Dorsolateral prefrontal cortex (tissue), 120 donors: ENCODE measurements at regions of chr12 and their contacts with region 1.

Region 1: DNA sequence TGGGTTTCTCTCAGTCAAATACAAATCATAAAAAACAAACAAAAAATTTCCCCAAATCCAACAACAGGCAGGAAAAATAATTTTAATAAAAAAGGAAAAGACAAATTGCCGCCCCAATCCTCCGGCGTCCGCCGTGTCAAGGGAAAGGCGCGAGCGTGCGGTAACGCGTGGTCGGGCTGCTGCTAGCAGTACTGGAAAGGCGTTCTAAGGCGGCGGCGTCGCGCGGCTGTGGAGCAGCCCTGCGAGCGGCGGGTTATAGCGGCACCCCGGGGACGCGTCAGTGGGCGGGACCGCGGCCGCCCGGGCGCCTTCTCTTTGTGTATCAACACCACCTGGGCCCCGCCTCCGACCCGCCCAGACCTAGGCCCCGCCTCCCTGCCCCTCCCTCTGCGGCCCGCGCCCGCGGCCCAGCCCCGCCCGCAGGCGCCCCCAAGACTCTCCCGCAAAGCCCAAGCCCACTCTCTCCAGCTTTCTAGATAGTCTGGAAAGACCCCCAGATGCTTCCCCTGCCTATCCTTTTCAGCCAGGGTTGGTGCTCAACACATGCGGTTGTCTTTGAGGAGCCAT is at the start of gene SLC38A2:
- DNase-seq: peak; percentile 97 to 99 (median 98)
- H3K4me3 ChIP-seq: peak within 1 kb of the TSS; percentile 61 to 99 (median 93)
- H3K27ac ChIP-seq: peak within 1 kb of the TSS; percentile 92 to 100 (median 99)
- H3K27me3 ChIP-seq: no peaks in the 10 kb centered on the region
- CTCF ChIP-seq: peak in 13 of 56 donors; percentile 5 to 48 (median 30)
- total RNA-seq, gene SLC38A2: 80.8 to 431 (median 175) TPM

Region 2: GRCh38 chr12:45728630-45729232 is 643.9 kb before region 1 on chr12:
- intact Hi-C with region 1: loop called in 1 of 2 experiments (anchors 5 kb)
- DNase-seq: peak; percentile 93 to 98 (median 96)
- H3K4me3 ChIP-seq: peak overlapping the region; percentile 54 to 97 (median 88)
- H3K27ac ChIP-seq: peak overlapping the region; percentile 95 to 100 (median 99)
- H3K27me3 ChIP-seq: no peaks in the 10 kb centered on the region
- CTCF ChIP-seq: peak; percentile 58 to 97 (median 82)

Region 3: DNA sequence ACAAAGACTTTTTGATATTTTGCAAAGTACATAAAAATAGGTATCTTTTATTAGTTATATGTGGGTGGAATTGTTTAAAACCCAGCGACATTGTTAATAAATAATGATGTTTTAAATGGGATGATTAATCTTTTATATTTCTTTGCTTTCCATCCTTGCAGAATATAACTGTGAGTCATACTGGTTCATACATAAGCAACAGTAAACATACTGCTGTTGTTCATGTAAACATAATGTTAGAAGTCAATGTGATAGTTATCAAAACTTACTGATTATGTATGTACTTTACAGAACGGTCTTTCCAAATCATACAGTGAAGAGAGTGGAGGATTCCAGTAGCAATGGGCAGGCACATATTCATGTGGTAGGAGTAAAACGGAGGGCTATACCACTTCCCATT is 523.3 kb before region 1 on chr12:
- intact Hi-C with region 1: no loop called
- DNase-seq: no peak
- H3K4me3 ChIP-seq: no peak overlapping the region
- H3K27ac ChIP-seq: no peak overlapping the region
- H3K27me3 ChIP-seq: no peaks in the 10 kb centered on the region
- CTCF ChIP-seq: no peak

Region 4: DNA sequence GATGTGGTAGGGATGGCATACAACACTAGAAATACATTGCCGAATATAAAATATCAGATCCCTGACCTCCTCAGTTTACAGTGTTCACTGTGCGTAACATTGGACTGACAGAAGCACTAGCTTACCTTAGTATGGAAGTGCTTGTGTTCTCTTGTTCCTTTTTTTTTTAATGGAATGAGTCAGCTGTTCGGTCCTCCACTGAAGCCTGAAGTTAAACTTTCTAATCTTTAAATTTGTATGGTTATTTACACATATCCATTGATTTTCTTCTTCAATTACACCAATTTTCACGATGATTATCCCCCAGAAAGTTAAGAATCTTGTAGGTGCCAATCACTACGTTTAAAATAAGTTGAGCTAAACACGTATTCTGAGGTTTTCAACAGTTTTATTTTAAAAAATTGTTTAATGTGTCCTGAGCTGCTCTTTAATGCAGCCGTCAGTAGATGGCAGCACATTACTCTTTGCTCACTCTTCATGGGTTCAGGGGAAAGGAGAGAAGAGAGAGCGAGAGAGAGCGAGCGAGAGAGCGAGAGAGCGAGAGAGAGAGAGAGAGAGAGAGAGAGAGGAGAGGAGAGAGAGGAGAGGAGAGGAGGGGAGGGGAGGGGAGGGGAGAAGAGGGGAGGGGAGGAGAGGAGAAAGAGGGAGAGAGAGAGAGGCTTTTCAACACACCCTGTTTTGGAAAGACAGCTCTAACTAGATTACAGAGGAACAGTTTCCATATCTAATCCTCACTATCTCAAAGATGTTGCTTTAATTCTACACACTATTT is 247.6 kb before region 1 on chr12:
- intact Hi-C with region 1: loop called in 1 of 2 experiments (anchors 10 kb)
- DNase-seq: peak in 5 of 10 donors; percentile 20 to 66 (median 52)
- H3K4me3 ChIP-seq: peak overlapping the region in 56 of 59 donors; percentile 3 to 63 (median 42)
- H3K27ac ChIP-seq: peak overlapping the region in 31 of 59 donors; percentile 2 to 76 (median 53)
- H3K27me3 ChIP-seq: no peaks in the 10 kb centered on the region
- CTCF ChIP-seq: peak; percentile 48 to 79 (median 68)

Region 5: GRCh38 chr12:46268590-46269558 is 103.8 kb before region 1 on chr12 and contains the start of gene SLC38A1:
- intact Hi-C with region 1: loop called (anchors 5 kb)
- DNase-seq: peak; percentile 56 to 90 (median 83)
- H3K4me3 ChIP-seq: peak within 1 kb of the TSS; percentile 53 to 89 (median 74)
- H3K27ac ChIP-seq: peak within 1 kb of the TSS in 58 of 59 donors; percentile 47 to 95 (median 84)
- H3K27me3 ChIP-seq: peaks cover 0 to 23% (median 0%) of the 10 kb centered on the region in 45 donors
- CTCF ChIP-seq: peak in 2 of 56 donors; percentile 7 to 27
- total RNA-seq, gene SLC38A1: 59.0 to 128 (median 90.2) TPM

Region 6: DNA sequence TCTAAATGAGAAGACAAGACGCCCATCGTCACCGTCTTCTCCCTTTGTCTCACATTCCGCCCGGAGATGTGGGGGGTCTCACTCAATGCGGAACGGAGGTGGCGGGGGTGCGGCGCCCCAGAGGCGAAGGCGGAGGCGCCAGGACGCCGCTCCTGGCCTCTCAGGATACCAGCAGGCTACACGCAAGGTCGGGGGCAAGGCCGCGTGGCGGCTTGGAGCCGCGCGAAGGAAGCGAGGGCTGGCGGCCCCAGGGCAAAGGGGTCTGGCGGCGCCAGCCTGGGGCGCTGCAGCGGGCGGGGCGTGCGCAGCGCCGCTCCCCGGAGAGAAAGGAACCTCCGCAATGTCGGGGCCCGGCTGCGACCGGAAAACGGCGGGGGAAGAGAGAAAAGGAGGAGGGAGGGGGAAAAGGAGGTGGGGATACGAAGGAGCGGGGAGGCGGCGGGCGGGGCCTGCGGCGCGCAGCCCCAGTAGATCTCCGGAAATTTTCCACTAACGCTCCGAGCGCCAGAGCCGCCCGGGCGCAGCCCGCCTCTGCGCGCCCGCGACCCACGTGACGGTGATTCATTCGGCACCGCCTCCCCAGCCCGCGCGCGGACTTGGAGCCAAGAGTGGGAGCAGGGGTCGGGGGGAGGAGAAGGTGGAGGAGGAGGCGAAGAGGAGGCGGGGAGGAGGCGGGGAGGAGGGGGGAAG is 10.5 kb after region 1 on chr12:
- intact Hi-C with region 1: loop called (anchors 1 kb)
- DNase-seq: peak; percentile 93 to 99 (median 95)
- H3K4me3 ChIP-seq: peak overlapping the region; percentile 51 to 93 (median 83)
- H3K27ac ChIP-seq: peak overlapping the region; percentile 92 to 100 (median 99)
- H3K27me3 ChIP-seq: no peaks in the 10 kb centered on the region
- CTCF ChIP-seq: peak in 45 of 56 donors; percentile 11 to 63 (median 36)

Region 7: DNA sequence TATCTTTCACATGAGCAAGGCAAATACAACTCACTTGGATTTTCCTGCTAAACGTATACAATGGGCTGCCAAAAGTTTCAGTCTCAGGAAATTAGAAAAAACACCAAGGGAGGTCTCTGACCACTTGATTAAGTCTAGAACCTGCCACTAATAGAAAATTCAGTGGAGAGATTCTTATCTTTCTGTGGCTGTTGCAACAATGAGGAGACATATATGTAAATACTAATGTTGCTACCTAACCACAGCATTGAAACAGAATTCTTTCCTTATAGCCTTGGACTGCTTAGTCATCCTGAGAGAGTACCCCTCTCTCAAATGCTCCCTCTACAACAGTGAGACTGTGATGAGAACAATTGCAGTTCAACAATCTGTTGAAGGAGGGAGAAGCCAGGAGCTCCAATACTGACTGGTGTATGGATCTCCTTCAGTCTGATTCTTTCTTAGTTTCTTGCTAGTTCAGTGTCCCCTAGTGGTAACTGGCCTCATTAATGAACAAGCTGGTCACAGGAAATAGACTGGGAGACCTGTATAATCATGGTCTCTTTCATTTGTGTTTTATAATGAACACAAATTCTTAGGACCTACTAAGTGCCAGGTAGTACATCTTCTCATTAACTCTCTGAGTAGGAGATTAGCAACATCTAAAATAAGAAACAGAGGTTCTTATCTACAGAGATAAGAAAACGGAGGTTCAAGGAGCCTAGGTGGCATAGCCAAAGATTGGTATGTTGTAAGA is 288.7 kb after region 1 on chr12:
- intact Hi-C with region 1: loop called (anchors 10 kb)
- DNase-seq: no peak
- H3K4me3 ChIP-seq: no peak overlapping the region
- H3K27ac ChIP-seq: peak overlapping the region in 6 of 59 donors; percentile 9 to 66 (median 39)
- H3K27me3 ChIP-seq: no peaks in the 10 kb centered on the region
- CTCF ChIP-seq: peak; percentile 47 to 81 (median 71)